ENCODE measurements at regions of chr12 and their contacts with region 1.

Region 1: DNA sequence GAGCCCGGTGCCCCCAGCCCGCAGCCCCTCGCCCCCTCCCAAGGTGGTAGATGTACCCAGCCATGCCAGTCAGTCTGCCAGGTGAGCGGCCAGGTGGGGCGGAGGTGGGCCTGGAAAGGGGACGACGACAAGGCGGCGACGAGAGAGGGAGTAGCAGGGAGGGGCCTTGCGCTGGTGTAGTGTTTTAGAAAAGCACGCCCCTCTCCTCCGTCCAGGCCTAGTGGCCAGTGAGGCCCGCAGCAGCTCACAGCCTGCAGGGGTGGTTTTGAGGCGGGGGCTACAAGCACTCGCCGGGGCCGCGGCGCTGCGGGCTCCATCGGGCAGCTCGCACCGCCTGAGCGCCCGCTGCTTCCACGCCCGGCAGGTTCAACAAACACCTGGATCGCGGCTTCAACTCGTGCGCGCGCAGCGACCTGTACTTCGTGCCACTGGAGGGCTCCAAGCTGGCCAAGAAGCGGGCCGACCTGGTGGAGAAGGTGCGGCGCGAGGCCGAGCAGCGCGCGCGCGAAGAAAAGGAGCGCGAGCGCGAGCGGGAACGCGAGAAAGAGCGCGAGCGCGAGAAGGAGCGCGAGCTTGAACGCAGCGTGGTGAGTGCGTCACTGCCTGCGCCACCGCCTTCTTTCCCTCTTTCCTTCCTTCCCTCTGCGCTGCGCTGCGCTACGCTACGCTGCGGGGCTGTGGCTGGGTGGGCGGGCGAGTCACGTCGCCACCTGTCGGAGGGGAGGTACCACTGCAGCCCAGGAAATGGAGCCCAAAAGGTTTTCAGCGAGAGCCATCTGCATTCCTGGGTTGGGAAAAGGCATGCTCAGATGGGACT is 5.9 kb upstream of the RNU7-1 start:
- DNase-seq: peak; percentile 95 to 98 (median 98)
- H3K4me3 ChIP-seq: peak overlapping the region; percentile 15 to 87 (median 81)
- H3K27ac ChIP-seq: peak overlapping the region; percentile 74 to 86
- H3K4me1 ChIP-seq: peaks cover 0 to 32% (median 28%) of the 10 kb centered on the region in 4 experiments
- H3K27me3 ChIP-seq: no peaks in the 10 kb centered on the region

Region 2: GRCh38 chr12:6953442-6954315 is 16.0 kb after region 1 on chr12:
- CTCF ChIA-PET with region 1: interaction called, 441 read pairs
- POLR2A ChIA-PET with region 1: interaction called, 26 read pairs
- DNase-seq: peak; percentile 88 to 94 (median 93)
- H3K4me3 ChIP-seq: peak overlapping the region; percentile 75 to 96 (median 87)
- H3K27ac ChIP-seq: peak overlapping the region; percentile 48 to 84
- H3K4me1 ChIP-seq: peaks cover 22 to 91% (median 87%) of the 10 kb centered on the region in 4 experiments
- H3K27me3 ChIP-seq: no peaks in the 10 kb centered on the region

Measured in common myeloid progenitor, CD34-positive (primary cell).